A673 (cell line): ENCODE measurements at regions of chr7 and their contacts with region 1.

Region 1: DNA sequence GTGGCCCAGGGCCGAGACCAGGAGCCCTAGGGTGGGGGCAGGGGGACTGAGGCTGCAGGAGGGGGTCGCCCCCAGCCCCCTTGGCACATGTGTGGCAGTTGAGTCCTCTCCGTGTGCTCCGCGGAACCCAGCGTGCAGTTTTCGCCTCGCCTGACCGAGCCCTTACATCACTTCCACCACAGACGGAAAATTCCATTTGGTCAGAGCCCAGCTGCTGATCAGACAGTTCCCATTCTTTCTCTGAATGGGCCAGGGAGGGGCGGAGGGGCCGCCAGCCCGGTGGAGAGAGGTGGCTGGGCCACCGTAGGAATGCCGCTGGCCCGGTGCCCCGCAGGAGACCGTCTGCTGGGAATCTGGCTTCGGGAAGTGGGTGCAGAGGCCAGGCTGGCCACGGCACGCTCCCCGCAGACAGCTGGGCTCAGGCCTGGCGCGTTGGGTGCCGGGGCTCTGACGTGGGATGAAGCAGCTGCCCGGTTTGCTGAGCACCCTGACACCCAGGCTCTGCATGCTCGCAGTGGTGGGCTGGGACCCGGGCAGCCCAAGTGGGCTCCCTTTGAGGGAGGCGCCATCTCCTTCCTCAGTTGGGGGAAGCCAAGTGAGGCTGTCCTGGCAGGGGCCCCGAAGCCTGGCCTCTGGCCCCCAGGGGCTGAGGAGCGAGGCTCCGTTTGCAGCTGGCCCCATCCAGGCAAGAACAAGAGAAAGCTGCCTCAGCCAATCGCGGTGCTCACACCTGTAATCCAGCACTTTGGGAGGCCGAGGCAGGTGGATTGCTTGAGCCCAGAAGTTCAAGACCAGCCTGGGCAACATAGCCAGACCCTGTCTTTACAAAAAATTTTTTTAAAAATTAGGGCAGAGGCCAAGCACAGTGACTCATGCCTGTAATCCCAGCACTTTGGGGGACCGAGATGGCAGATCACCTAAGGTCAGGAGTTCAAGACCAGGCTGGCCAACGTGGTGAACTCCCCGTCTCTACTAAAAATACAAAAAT is 9.9 kb downstream of the TTYH3 start:
- DNase-seq: peak; percentile 52
- H3K4me3 ChIP-seq: no peak overlapping the region
- H3K27ac ChIP-seq: peak overlapping the region; percentile 37
- H3K4me1 ChIP-seq: peaks cover 24% of the 10 kb centered on the region
- H3K27me3 ChIP-seq: no peaks in the 10 kb centered on the region
- CTCF ChIP-seq: no peak

Region 2: DNA sequence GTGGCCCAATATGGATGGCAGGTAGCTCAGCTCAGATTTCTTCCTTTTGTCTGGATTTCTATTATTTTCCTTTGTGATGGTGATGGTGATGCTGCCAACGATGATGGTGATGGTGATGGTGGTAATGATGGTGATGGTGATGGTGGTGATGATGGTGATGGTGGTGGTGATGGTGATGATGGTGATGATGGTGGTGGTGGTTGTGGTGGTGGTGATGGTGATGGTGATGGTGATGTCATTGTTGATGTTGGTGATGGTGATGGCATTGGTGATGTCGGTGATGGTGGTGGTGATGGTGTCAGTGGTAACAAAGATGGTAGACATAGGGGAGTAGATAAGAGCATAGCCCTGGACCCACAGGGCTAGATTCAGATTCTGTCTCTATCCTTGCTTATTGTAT is 15.5 kb after region 1 on chr7:
- CTCF ChIA-PET with region 1: interaction called, 3 read pairs
- POLR2A ChIA-PET with region 1: interaction called, 11 read pairs
- intact Hi-C with region 1: no loop called
- DNase-seq: no peak
- H3K4me3 ChIP-seq: no peak overlapping the region
- H3K27ac ChIP-seq: no peak overlapping the region
- H3K4me1 ChIP-seq: no peaks in the 10 kb centered on the region
- H3K27me3 ChIP-seq: no peaks in the 10 kb centered on the region
- CTCF ChIP-seq: no peak

Region 3: DNA sequence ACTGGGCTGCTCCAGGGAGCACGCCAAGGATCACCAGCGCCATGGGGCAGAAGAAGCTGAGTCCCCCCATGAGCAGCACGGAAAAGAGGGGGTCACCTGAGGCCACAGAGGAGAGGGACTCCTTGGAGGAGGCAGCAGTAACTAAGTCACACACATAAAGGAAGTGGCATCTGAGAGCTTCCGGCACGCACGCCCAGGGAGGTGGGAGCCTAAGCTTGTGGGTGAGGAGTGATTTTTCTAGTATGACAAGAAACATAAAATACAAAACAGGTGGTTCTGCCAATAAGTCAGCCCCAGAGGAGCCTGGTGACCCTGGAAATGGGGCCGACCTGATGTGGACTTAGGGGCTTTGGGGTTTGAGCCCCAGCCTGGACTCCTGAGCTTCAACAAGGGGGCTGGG is 341.1 kb after region 1 on chr7:
- CTCF ChIA-PET with region 1: no interaction called
- POLR2A ChIA-PET with region 1: interaction called, 15 read pairs
- intact Hi-C with region 1: no loop called
- DNase-seq: no peak
- H3K4me3 ChIP-seq: no peak overlapping the region
- H3K27ac ChIP-seq: no peak overlapping the region
- H3K4me1 ChIP-seq: no peaks in the 10 kb centered on the region
- H3K27me3 ChIP-seq: peaks cover 21% of the 10 kb centered on the region
- CTCF ChIP-seq: no peak